GM12878 (cell line): ENCODE measurements at regions of chr11 and their contacts with region 1.

Region 1: GRCh38 chr11:11265994-11266606 is 87.0 kb downstream of the CSNK2A3 start:
- DNase-seq: no peak
- ATAC-seq: peak; percentile 91
- H3K4me3 ChIP-seq: no peak overlapping the region
- H3K27ac ChIP-seq: no peak overlapping the region
- H3K4me1 ChIP-seq: peaks cover 17% of the 10 kb centered on the region
- H3K27me3 ChIP-seq: no peaks in the 10 kb centered on the region; a peak in 1 of 4 replicates
- CTCF ChIP-seq: peak; percentile 83 to 97 (median 92)
- EP300 ChIP-seq: no peak
- POLR2A ChIP-seq: no peak
- RAD21 ChIP-seq: peak; percentile 78

Region 2: GRCh38 chr11:10818594-10818993 is 447.5 kb before region 1 on chr11:
- CTCF ChIA-PET with region 1: no interaction called
- POLR2A ChIA-PET with region 1: no interaction called
- RAD21 ChIA-PET with region 1: no interaction called
- SMC1A ChIA-PET with region 1: no interaction called
- in situ Hi-C with region 1: no loop called
- intact Hi-C with region 1: no loop called
- DNase-seq: no peak
- ATAC-seq: no peak
- H3K4me3 ChIP-seq: no peak overlapping the region
- H3K27ac ChIP-seq: no peak overlapping the region
- H3K4me1 ChIP-seq: no peaks in the 10 kb centered on the region
- H3K27me3 ChIP-seq: no peaks in the 10 kb centered on the region
- CTCF ChIP-seq: no peak
- EP300 ChIP-seq: no peak
- POLR2A ChIP-seq: no peak
- RAD21 ChIP-seq: no peak

Region 3: GRCh38 chr11:10933455-10934292 is 332.4 kb before region 1 on chr11:
- CTCF ChIA-PET with region 1: interaction called, 3 read pairs
- POLR2A ChIA-PET with region 1: no interaction called
- RAD21 ChIA-PET with region 1: interaction called, 4 read pairs
- SMC1A ChIA-PET with region 1: interaction called, 3 read pairs
- in situ Hi-C with region 1: no loop called
- intact Hi-C with region 1: loop called (anchors 5 kb)
- DNase-seq: peak; percentile 39
- ATAC-seq: peak; percentile 94
- H3K4me3 ChIP-seq: no peak overlapping the region
- H3K27ac ChIP-seq: no peak overlapping the region
- H3K4me1 ChIP-seq: no peaks in the 10 kb centered on the region
- H3K27me3 ChIP-seq: peaks cover 4 to 13% of the 10 kb centered on the region in 2 experiments
- CTCF ChIP-seq: peak; percentile 91 to 97 (median 95); a peak in 5 of 6 replicates
- EP300 ChIP-seq: no peak
- POLR2A ChIP-seq: no peak
- RAD21 ChIP-seq: peak; percentile 86

Region 4: DNA sequence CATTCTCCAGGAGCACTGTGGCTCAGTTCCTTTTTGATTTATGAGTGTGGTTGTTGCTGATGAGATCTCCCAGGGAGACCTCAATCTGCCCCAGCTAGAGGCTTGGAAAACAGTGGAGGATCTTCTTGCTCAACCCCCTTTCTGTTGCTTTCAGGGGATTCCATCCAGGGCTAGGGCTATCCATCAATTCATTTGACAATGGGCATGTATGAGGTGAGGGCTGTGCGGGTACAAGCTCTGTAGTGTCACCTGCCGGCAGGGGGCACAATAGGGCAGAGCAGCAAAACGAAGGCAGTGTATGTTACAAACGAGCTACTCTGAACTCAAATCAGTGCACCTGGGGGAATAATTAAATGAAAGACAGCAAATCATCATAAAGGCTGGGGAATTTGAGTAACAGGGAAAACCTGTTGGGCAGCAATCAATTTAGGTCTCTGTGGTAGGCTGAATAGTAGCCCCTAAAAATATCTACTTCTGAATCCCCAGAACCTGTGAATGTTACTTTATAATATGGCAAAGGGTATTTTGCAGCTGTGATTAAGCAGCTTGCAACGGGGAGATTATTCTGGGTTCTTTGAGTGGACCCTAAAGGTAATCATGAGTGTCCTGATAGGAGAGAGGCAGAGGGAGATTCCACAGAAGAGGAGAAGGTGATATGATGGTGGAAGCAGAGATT is 237.9 kb before region 1 on chr11:
- CTCF ChIA-PET with region 1: interaction called, 70 read pairs
- POLR2A ChIA-PET with region 1: no interaction called
- RAD21 ChIA-PET with region 1: interaction called, 7 read pairs
- SMC1A ChIA-PET with region 1: interaction called, 9 read pairs
- in situ Hi-C with region 1: no loop called
- intact Hi-C with region 1: loop called (anchors 2 kb)
- DNase-seq: no peak
- ATAC-seq: peak; percentile 97
- H3K4me3 ChIP-seq: no peak overlapping the region
- H3K27ac ChIP-seq: no peak overlapping the region
- H3K4me1 ChIP-seq: no peaks in the 10 kb centered on the region
- H3K27me3 ChIP-seq: peaks cover 0 to 2% of the 10 kb centered on the region in 2 experiments; a peak in 2 of 4 replicates
- CTCF ChIP-seq: peak; percentile 81 to 88 (median 83)
- EP300 ChIP-seq: no peak
- POLR2A ChIP-seq: no peak
- RAD21 ChIP-seq: peak; percentile 74

Region 5: GRCh38 chr11:11036848-11037732 is 229.0 kb before region 1 on chr11:
- CTCF ChIA-PET with region 1: interaction called, 70 read pairs
- POLR2A ChIA-PET with region 1: no interaction called
- RAD21 ChIA-PET with region 1: interaction called, 10 read pairs
- SMC1A ChIA-PET with region 1: interaction called, 6 read pairs
- in situ Hi-C with region 1: loop called (anchors 5 kb)
- intact Hi-C with region 1: loop called (anchors 2 kb)
- DNase-seq: no peak
- ATAC-seq: peak; percentile 92
- H3K4me3 ChIP-seq: no peak overlapping the region
- H3K27ac ChIP-seq: no peak overlapping the region
- H3K4me1 ChIP-seq: no peaks in the 10 kb centered on the region
- H3K27me3 ChIP-seq: no peaks in the 10 kb centered on the region
- CTCF ChIP-seq: peak; percentile 69 to 81 (median 73)
- EP300 ChIP-seq: no peak
- POLR2A ChIP-seq: no peak
- RAD21 ChIP-seq: peak; percentile 78

Region 6: GRCh38 chr11:11044137-11044855 is 221.8 kb before region 1 on chr11:
- CTCF ChIA-PET with region 1: interaction called, 70 read pairs
- POLR2A ChIA-PET with region 1: no interaction called
- RAD21 ChIA-PET with region 1: no interaction called
- SMC1A ChIA-PET with region 1: interaction called, 6 read pairs
- in situ Hi-C with region 1: loop called (anchors 5 kb)
- intact Hi-C with region 1: no loop called
- DNase-seq: no peak
- ATAC-seq: no peak
- H3K4me3 ChIP-seq: no peak overlapping the region
- H3K27ac ChIP-seq: no peak overlapping the region
- H3K4me1 ChIP-seq: no peaks in the 10 kb centered on the region
- H3K27me3 ChIP-seq: no peaks in the 10 kb centered on the region
- CTCF ChIP-seq: no peak
- EP300 ChIP-seq: no peak
- POLR2A ChIP-seq: no peak
- RAD21 ChIP-seq: no peak

Region 7: DNA sequence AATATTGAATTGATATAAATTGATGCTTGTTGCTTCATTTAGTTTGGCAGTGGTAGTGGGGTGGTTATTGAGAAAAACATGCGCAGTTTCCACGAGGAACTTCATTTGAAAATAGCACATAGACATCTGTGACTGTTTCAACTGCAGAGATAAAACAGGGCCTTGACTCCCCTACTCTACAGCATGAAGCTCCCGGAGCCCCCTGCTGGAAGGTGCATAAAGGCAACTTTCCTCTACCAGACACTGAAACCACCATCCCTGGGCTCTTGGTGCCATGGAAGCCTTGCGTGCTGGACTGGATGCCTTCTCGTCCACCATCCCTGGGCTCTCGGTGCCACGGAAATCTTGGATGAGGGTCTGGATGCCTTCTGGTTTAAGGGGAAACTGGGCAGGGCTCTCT is 108.9 kb before region 1 on chr11:
- CTCF ChIA-PET with region 1: interaction called, 5 read pairs
- POLR2A ChIA-PET with region 1: no interaction called
- RAD21 ChIA-PET with region 1: no interaction called
- SMC1A ChIA-PET with region 1: interaction called, 12 read pairs
- in situ Hi-C with region 1: no loop called
- intact Hi-C with region 1: loop called (anchors 2 kb)
- DNase-seq: no peak
- ATAC-seq: peak; percentile 73
- H3K4me3 ChIP-seq: no peak overlapping the region
- H3K27ac ChIP-seq: no peak overlapping the region
- H3K4me1 ChIP-seq: no peaks in the 10 kb centered on the region
- H3K27me3 ChIP-seq: no peaks in the 10 kb centered on the region; a peak in 1 of 4 replicates
- CTCF ChIP-seq: peak; percentile 30 to 52 (median 37); a peak in 5 of 6 replicates
- EP300 ChIP-seq: no peak
- POLR2A ChIP-seq: no peak
- RAD21 ChIP-seq: peak; percentile 40

Region 8: DNA sequence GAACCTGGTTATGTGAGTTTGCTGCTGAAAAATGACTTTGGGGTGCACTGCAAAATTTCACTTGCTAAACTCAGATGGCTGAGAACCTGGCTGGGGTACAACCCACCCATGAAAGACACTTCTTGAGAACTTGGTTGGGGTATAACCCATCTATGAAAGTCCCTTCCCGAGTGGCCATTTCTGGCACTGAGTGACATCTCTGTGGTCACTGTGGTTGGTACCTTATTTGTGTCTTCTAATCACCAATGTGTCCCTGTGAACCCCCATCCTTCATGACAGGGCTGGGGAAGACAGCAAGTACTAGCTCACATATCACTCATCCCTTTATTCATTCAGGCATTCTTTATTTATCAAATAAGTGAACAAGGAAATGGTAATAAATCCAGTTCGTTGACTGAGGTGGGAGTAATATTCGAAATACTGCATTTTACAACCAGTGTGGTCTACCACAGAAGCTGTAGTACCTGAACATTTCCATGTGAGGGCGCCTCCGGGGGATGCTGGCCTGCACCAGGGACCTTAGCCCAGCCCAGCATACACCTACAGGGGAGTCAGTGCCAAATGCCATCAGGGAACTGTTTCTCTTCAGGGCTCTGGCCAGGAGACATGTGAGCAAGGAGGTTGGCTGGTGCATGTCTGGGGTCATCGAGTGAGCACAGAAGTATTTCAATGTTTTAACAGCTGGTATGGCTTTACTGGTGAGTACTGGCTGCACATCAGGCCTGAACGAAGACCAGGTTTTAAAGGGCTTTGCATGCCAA is 35.1 kb before region 1 on chr11:
- CTCF ChIA-PET with region 1: interaction called, 39 read pairs
- POLR2A ChIA-PET with region 1: interaction called, 3 read pairs
- RAD21 ChIA-PET with region 1: interaction called, 6 read pairs
- SMC1A ChIA-PET with region 1: interaction called, 12 read pairs
- in situ Hi-C with region 1: no loop called
- intact Hi-C with region 1: loop called (anchors 2 kb)
- DNase-seq: peak; percentile 59
- ATAC-seq: peak; percentile 81
- H3K4me3 ChIP-seq: no peak overlapping the region
- H3K27ac ChIP-seq: no peak overlapping the region
- H3K4me1 ChIP-seq: no peaks in the 10 kb centered on the region; the same call in 1 of the 2 replicates
- H3K27me3 ChIP-seq: no peaks in the 10 kb centered on the region; a peak in 1 of 4 replicates
- CTCF ChIP-seq: peak; percentile 26 to 60 (median 57)
- EP300 ChIP-seq: no peak
- POLR2A ChIP-seq: no peak
- RAD21 ChIP-seq: peak; percentile 37